ENCODE measurements at regions of chrX and their contacts with region 1.

Region 1: DNA sequence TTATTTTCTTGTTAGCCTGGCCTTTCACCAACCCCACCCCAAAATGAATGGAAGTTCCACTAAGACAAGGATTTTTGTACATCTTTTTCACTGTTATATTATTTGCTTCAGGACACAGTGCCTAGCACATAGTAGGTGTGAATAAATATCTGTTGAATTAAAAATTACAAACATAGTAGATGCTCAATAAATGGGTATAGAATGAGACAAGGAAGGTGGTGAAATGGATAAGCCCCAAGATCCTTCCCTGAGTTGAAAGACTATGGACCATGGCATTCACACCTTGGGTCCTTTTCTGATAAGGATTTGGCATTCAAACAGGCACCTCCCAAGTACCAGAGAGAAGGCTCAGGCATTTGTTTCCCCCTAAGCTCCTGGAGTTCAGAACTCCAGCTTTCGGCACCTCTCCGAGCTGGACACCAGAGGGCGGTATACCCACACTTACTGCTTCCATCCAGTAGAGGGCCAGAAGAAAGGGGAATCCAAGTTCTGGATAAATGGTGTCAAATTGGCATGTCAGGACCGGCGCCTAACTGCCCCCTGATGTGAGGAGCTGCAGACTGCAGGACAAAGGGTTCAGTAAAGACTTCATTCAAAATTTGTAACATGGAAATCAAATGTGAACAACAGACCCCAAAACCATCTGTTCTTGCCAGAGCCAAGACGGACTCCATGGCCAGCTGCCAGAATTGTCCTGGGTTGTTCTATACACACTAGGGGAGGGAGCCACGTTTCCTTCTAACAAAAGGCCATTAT is 193.0 kb downstream of the GPC3 start:
- DNase-seq: peak; percentile 19
- H3K4me3 Mint-ChIP-seq: no peak overlapping the region
- H3K27ac Mint-ChIP-seq: no peak overlapping the region
- H3K4me1 Mint-ChIP-seq: no peaks in the 10 kb centered on the region
- H3K27me3 Mint-ChIP-seq: peaks cover 9% of the 10 kb centered on the region

Region 2: DNA sequence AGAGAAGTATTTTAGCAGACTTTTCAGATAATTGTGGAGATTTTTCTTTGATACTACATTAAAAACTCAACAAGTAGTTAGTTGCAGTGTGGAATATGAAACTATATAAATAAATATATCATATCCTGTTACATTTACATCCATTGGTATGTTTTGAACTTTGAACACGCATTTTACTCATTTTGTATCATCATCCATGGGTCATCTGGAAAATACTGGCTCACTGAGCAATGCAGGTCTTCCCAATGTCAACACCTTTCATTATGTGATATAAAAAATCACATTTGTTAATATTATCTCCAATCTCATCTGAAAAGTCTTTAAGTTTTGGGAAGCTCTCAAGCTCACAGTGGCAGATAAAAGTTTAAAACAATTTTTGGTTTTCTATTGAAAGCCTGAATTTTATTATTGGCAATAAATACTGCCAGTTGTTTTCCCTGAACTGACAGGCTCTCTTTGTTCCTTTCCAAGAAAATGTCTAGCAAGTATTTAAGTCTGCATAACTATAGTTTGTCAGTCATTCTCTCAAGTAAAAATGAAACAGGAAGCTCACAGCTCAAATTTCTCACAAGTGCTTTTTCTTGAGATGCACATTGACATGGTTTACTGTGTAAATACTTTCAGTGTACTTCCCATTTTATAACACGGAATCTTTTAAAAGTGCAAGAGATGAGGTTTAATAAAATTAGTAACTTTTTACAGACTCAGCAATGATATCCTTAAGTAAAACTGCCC is 193.6 kb before region 1 on chrX:
- intact Hi-C with region 1: no loop called
- DNase-seq: no peak
- H3K4me3 Mint-ChIP-seq: no peak overlapping the region
- H3K27ac Mint-ChIP-seq: no peak overlapping the region
- H3K4me1 Mint-ChIP-seq: no peaks in the 10 kb centered on the region
- H3K27me3 Mint-ChIP-seq: no peaks in the 10 kb centered on the region

Region 3: GRCh38 chrX:133921764-133922389 is 129.5 kb after region 1 on chrX:
- intact Hi-C with region 1: loop called (anchors 5 kb)
- DNase-seq: peak; percentile 1
- H3K4me3 Mint-ChIP-seq: no peak overlapping the region
- H3K27ac Mint-ChIP-seq: no peak overlapping the region
- H3K4me1 Mint-ChIP-seq: peaks cover 10% of the 10 kb centered on the region
- H3K27me3 Mint-ChIP-seq: peaks cover 7% of the 10 kb centered on the region

Region 4: GRCh38 chrX:134026565-134027311 is 234.4 kb after region 1 on chrX:
- intact Hi-C with region 1: loop called (anchors 1 kb)
- DNase-seq: peak; percentile 1
- H3K4me3 Mint-ChIP-seq: no peak overlapping the region
- H3K27ac Mint-ChIP-seq: no peak overlapping the region
- H3K4me1 Mint-ChIP-seq: peaks cover 10% of the 10 kb centered on the region
- H3K27me3 Mint-ChIP-seq: peaks cover 3% of the 10 kb centered on the region

Region 5: DNA sequence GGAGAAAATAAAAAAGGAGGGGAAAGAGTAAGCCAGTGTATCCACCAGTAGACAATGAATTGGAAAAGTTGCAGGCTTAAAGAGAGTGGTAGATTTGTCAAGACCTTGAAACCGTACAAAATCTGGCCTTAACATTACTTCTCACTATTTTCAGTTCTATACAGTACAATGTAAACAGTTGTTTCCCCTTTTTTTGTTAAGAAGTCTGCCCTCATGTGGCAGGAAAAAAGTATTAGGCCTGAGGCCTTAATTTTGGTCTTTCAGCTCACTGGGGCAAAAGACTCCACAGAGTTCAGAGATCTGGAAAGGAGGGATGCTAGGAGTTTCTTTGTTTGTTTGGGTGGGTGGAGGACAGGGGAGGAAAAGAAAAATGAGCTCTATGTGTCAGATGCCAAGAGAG is 351.9 kb after region 1 on chrX:
- intact Hi-C with region 1: loop called (anchors 1 kb)
- DNase-seq: no peak
- H3K4me3 Mint-ChIP-seq: no peak overlapping the region
- H3K27ac Mint-ChIP-seq: no peak overlapping the region
- H3K4me1 Mint-ChIP-seq: peaks cover 5% of the 10 kb centered on the region
- H3K27me3 Mint-ChIP-seq: peaks cover 3% of the 10 kb centered on the region

Region 6: GRCh38 chrX:134251241-134251640 is 458.9 kb after region 1 on chrX:
- intact Hi-C with region 1: loop called (anchors 1 kb)
- DNase-seq: no peak
- H3K4me3 Mint-ChIP-seq: no peak overlapping the region
- H3K27ac Mint-ChIP-seq: no peak overlapping the region
- H3K4me1 Mint-ChIP-seq: peaks cover 5% of the 10 kb centered on the region
- H3K27me3 Mint-ChIP-seq: no peaks in the 10 kb centered on the region

Region 7: DNA sequence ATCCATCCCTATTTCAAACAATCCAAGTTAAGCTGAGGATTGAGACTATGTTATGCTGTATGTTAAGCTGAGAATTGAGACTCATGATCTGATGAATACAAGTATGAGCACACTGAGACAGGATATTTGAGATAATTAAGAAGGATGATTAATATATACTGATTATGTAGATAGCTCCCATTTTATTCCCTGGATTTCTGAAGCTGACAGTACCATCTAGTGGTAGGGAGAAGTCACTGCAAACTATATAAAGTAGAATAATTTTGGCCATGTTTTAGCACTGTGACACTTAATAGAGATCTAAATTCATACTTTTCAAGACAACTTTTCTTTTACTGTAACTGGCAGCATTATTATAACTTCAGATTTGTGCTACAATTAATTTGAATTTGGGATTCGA is 603.8 kb after region 1 on chrX:
- intact Hi-C with region 1: loop called (anchors 2 kb)
- DNase-seq: no peak
- H3K4me3 Mint-ChIP-seq: no peak overlapping the region
- H3K27ac Mint-ChIP-seq: peak overlapping the region; percentile 34
- H3K4me1 Mint-ChIP-seq: peaks cover 5% of the 10 kb centered on the region
- H3K27me3 Mint-ChIP-seq: no peaks in the 10 kb centered on the region

Measured in activated T-helper 1 cell treated with anti-CD3 and anti-CD28 coated beads, Interleukin-12 subunit alpha, Interleukin-12 subunit beta, Interleukin-2, Interleukin-4 antibody, amounts not matched to agents 30 ng/mL and 10 ng/mL and 1 ng/mL, durations not matched to agents 14 hours and 24 hours and 36 hours (primary cell).